ENCODE measurements at regions of chr11 and their contacts with region 1.

Region 1: DNA sequence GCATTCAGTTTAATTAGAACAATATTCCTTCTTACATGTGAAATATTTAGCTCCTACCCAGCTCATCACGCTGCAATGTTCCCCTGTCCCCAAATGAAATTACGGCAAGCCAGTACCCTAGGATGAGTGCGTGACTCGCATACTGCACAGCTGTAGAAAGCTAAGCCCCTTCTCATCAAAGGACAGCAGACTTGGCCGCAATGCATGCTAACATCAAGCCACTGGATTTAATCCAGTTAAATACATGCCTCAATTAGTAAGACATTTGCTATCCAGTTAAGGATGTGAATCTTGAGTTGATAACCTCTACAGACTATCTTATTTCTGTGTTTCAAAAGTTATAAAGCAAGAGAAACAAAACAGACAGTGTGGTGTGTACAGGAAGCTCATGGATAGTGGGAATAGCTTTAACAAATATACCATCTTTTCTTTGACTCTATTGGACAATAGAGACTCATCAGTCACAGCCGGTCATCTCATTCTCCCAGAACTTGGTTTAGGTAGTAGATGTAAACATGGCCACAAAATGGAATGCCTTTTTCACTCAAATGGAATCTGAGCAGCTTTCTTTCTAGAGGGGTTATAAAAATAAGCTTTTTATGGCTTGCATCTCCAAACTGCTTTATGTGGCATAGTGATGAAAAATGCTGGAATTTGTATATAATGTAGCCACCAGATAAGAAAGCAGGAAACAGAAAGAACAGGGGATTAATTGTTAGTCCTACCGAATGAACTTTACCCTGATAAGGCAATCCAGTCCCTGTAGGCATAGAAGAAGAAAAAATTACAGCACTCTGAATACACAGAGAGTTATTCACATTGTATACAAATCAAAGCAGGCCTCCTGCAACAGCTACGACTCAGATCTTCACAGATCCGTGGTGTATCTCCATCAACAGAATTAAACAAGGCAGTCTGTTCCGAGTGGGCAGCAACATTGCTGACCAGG is 224.1 kb downstream of the CADM1 start:
- DNase-seq: no peak
- ATAC-seq: no peak

Region 2: GRCh38 chr11:113831314-113831713 is 1448.8 kb before region 1 on chr11:
- intact Hi-C with region 1: loop called (anchors 5 kb)
- DNase-seq: no peak
- ATAC-seq: no peak

Region 3: DNA sequence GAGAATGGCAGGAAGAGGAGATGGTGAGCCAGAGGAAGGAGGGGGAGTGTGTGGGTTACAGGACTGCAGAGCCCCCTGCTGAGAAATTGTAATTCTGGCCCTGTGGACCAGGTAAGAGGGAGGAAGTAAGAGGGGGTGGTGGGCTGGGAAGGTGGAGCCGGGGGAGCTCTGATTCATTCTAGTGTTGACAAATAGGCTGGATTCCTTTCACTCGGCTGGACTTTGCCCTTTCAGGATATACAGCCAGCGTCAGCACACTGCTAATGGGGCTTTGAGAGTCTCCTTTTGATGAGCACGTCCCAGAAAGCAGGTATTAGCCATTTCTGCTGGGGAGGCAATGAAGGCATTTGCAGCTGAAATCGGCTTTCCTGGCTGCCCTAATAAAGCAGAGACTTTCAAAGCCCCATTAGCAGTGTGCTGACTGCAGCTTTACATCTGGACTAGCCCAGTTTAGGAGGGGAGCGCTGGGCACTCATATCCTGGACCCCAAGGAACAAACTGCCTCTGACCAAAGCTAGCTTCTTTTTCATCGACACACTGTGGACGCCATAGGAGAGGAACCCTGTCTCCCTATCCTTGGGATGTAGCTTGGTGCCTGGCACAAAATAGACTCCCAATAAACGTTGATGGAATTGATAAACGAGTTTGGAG is 268.9 kb after region 1 on chr11:
- intact Hi-C with region 1: no loop called
- DNase-seq: no peak
- ATAC-seq: no peak